Heart left ventricle (tissue), 16 donors: ENCODE measurements at regions of chr12 and their contacts with region 1.

Region 1: GRCh38 chr12:17763366-17763765 is 326.6 kb downstream of the RERGL start:
- DNase-seq: no peak
- ATAC-seq: no peak
- H3K4me3 ChIP-seq: no peak overlapping the region
- H3K27ac ChIP-seq: no peak overlapping the region
- H3K4me1 ChIP-seq: no peaks in the 10 kb centered on the region
- H3K27me3 ChIP-seq: no peaks in the 10 kb centered on the region
- CTCF ChIP-seq: no peak
- POLR2A ChIP-seq: no peak

Region 2: GRCh38 chr12:17778242-17778641 is 14.9 kb after region 1 on chr12:
- intact Hi-C with region 1: no loop called
- DNase-seq: no peak
- ATAC-seq: no peak
- H3K4me3 ChIP-seq: no peak overlapping the region
- H3K27ac ChIP-seq: no peak overlapping the region
- H3K4me1 ChIP-seq: no peaks in the 10 kb centered on the region
- H3K27me3 ChIP-seq: no peaks in the 10 kb centered on the region
- CTCF ChIP-seq: no peak
- POLR2A ChIP-seq: no peak

Region 3: DNA sequence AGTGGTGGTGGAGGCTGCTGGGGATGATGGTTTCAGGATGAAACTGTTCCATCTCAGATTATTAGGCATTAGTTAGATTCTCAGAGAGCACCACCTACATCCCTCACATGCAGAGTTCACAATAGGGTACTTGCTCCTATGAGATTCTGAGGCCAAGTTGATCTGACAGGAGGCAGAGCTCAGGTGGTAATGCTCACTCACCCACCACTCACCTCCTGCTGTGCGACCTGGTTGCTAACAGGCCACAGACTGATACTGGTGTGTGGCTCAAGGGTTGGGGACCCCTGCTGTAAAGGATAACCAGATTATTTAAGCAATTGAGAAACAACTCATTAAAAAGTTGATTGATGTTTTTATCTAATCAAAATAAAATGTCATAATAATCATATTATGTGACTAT is 78.1 kb after region 1 on chr12:
- intact Hi-C with region 1: loop called in 2 of 10 experiments (anchors 5 to 10 kb)
- DNase-seq: no peak
- ATAC-seq: no peak
- H3K4me3 ChIP-seq: no peak overlapping the region
- H3K27ac ChIP-seq: no peak overlapping the region
- H3K4me1 ChIP-seq: no peaks in the 10 kb centered on the region
- H3K27me3 ChIP-seq: no peaks in the 10 kb centered on the region
- CTCF ChIP-seq: no peak
- POLR2A ChIP-seq: no peak

Region 4: GRCh38 chr12:17853054-17853453 is 89.7 kb after region 1 on chr12:
- intact Hi-C with region 1: loop called (anchors 2 to 10 kb)
- DNase-seq: no peak
- ATAC-seq: no peak
- H3K4me3 ChIP-seq: no peak overlapping the region
- H3K27ac ChIP-seq: no peak overlapping the region
- H3K4me1 ChIP-seq: no peaks in the 10 kb centered on the region
- H3K27me3 ChIP-seq: no peaks in the 10 kb centered on the region
- CTCF ChIP-seq: no peak
- POLR2A ChIP-seq: no peak

Region 5: DNA sequence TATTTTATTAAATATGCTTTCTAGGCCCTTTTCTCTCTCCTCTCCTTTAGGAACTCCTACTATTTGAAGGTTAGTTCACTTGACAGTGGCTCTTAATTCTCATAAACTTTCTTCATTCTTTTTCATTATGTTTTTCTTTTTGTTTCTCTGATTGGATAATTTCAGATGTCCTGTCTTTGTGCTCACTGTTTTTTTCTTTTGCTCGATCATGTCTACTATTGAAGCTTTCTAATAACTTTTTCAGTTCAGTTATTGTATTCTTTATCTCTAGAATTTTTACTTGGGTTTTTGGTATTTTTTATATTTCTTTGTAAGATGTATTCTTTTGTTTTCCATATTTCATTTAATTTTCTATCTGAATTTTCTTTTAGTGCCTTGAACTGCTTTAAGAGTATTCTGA is 759.4 kb after region 1 on chr12:
- intact Hi-C with region 1: no loop called
- DNase-seq: no peak
- ATAC-seq: no peak
- H3K4me3 ChIP-seq: no peak overlapping the region
- H3K27ac ChIP-seq: no peak overlapping the region
- H3K4me1 ChIP-seq: no peaks in the 10 kb centered on the region
- H3K27me3 ChIP-seq: no peaks in the 10 kb centered on the region
- CTCF ChIP-seq: no peak
- POLR2A ChIP-seq: no peak